ENCODE measurements at regions of chr1 and their contacts with region 1.

Region 1: GRCh38 chr1:61049850-61050540 is 32.4 kb upstream of the NFIA start:
- DNase-seq: peak; percentile 92 to 97 (median 95)
- H3K4me3 ChIP-seq: peak overlapping the region; percentile 76 to 99 (median 84)
- H3K27ac ChIP-seq: peak overlapping the region; percentile 47 to 95 (median 94)
- H3K4me1 ChIP-seq: peaks cover 6 to 36% of the 10 kb centered on the region in 2 donors
- H3K27me3 ChIP-seq: no peaks in the 10 kb centered on the region
- CTCF ChIP-seq: peak; percentile 95 to 98 (median 97)
- POLR2A ChIP-seq: peak; percentile 15 to 59

Region 2: GRCh38 chr1:60857851-60858250 is 192.1 kb before region 1 on chr1:
- intact Hi-C with region 1: loop called in 1 of 2 experiments (anchors 10 kb)
- DNase-seq: no peak
- H3K4me3 ChIP-seq: no peak overlapping the region
- H3K27ac ChIP-seq: no peak overlapping the region
- H3K4me1 ChIP-seq: no peaks in the 10 kb centered on the region
- H3K27me3 ChIP-seq: no peaks in the 10 kb centered on the region
- CTCF ChIP-seq: no peak
- POLR2A ChIP-seq: no peak

Region 3: DNA sequence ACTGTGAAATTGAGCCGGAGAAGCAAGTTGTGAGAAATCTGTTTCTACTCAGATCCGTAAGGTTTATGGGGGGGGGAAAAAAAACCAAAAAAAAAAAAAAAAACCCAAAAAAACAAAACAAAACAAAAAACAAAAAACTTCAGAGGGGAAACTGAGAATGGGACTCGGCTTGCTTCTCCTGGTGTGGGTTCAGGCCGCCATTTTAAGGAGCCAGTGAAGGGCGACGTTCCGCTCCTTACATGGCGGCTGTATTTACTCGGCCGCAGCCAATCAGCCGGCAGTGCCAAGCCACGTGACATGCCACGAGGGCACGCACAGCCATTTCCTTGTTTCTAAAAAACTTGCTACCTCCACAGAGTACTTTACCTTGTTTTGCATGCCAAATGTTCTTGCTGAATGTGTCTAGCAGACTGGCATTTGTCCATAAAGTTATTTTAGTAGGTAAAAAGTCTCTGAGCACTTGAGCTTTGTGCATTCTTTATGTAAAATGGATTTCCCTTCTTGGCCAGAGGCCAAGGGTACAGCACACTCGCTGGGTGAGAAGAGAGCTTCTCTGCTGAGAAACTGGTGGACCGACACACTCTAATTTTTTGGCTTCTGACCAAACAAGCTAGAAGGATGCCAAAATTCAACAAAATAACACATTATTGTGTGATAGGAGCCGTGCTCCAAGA is 134.2 kb after region 1 on chr1:
- intact Hi-C with region 1: loop called in 1 of 2 experiments (anchors 10 kb)
- DNase-seq: peak; percentile 85 to 96 (median 95)
- H3K4me3 ChIP-seq: peak overlapping the region in 1 of 4 donors; percentile 33
- H3K27ac ChIP-seq: peak overlapping the region; percentile 26 to 79 (median 58)
- H3K4me1 ChIP-seq: peaks cover 9 to 63% of the 10 kb centered on the region in 2 donors
- H3K27me3 ChIP-seq: no peaks in the 10 kb centered on the region
- CTCF ChIP-seq: peak in 1 of 6 experiments; percentile 10
- POLR2A ChIP-seq: no peak

Region 4: DNA sequence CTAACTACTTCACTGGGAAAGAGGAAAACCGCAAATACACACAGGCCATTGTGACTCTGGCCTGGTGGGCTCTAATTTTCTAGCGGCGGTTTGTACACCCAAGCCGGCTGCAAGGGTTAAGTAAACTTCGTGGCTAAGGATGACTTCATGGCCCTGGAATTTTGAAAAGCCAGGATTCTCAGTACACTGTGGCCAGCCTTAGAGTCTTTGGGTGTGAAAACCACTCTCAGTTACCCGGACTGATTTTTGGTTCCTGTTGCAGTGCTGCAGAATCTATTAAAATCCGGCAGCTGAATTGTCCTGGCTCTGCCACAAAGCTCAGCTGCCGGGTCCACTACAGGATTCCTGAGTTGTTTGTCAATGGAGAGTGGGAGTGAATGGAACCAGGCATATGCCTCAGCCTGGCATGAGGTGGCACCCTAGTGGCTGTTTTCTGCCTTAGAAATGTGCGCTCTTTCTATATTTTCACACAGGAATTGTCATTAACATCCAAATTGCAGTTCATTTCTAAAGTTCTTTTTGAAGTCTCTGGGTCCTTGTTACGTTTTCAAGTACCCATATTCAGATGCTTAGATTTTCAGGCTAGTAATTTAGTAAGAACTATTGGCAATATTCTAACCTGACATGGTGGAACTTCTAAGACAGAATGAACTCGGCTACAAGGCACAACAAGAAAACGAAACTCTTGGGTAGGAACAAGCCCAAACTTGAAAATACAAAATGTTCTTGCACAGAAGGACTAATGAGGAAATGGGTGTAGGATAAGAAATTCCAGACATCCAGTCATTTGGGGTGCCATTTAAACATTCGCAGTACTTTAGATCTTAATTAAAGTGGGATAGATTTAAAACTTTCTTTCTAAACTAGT is 288.2 kb after region 1 on chr1:
- intact Hi-C with region 1: loop called (anchors 5 to 10 kb)
- DNase-seq: peak; percentile 67 to 91 (median 86)
- H3K4me3 ChIP-seq: peak overlapping the region in 1 of 4 donors; percentile 32
- H3K27ac ChIP-seq: peak overlapping the region in 4 of 5 donors; percentile 64 to 81 (median 71)
- H3K4me1 ChIP-seq: peaks cover 19 to 30% of the 10 kb centered on the region in 2 donors
- H3K27me3 ChIP-seq: no peaks in the 10 kb centered on the region
- CTCF ChIP-seq: peak; percentile 71 to 89 (median 80)
- POLR2A ChIP-seq: peak in 1 of 2 donors; percentile 22

Region 5: GRCh38 chr1:61448914-61449313 is 398.9 kb after region 1 on chr1:
- intact Hi-C with region 1: loop called in 1 of 2 experiments (anchors 10 kb)
- DNase-seq: peak in 6 of 7 donors; percentile 27 to 81 (median 49)
- H3K4me3 ChIP-seq: no peak overlapping the region
- H3K27ac ChIP-seq: peak overlapping the region in 3 of 5 donors; percentile 28 to 80 (median 72)
- H3K4me1 ChIP-seq: peaks cover 24 to 62% of the 10 kb centered on the region in 2 donors
- H3K27me3 ChIP-seq: no peaks in the 10 kb centered on the region
- CTCF ChIP-seq: no peak
- POLR2A ChIP-seq: no peak

Region 6: DNA sequence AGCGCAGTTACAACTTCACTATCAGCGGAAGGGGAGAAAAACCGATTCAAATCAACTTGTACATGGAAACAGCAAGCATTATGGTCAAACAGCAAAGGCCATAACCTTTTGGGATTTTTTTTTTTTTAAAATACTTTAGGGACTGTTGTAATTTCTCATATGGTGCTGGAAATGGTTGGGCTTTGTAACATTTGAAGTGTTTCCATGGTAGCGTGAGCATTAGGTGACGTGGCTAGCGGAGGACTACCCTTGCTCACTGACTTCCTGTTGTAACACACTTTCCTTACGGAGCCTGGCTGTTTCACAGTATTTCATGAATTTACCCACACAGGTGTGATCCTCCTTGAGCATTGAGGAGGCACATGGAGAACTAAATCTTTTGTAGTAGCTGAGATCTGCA is 405.4 kb after region 1 on chr1:
- intact Hi-C with region 1: loop called in 1 of 2 experiments (anchors 5 kb)
- DNase-seq: no peak
- H3K4me3 ChIP-seq: no peak overlapping the region
- H3K27ac ChIP-seq: no peak overlapping the region
- H3K4me1 ChIP-seq: peaks cover 19 to 44% of the 10 kb centered on the region in 2 donors
- H3K27me3 ChIP-seq: no peaks in the 10 kb centered on the region
- CTCF ChIP-seq: no peak
- POLR2A ChIP-seq: no peak

Region 7: DNA sequence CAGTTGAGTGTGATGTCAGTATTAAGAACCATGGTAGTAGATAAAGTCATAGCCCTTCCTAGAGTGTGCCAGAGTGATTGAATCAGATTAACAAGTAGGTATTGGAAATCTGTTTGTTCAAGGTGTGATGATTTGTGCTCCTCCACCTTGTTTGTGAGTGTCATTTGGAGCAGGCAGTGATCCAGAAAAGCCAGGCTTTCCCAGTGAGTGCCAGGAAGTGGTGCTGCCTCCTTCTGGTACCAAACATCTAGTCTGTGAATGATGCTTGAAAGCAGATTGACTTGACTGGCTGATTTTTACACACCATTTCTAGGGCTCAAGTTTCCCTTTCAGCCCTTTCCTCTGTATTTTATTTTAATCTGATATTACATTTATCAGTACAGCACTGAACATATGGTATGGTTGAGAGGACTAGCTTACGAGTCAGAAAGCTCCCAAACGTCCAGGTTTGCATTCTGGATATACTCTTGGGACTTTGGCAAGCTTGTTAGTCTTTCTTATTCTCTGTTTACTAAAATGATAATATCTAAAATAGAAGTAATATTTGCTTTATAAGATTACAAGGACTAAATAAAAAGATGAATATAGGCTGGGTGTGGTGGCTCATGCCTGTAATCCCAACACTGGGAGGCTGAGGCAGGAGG is 793.0 kb after region 1 on chr1:
- intact Hi-C with region 1: loop called in 1 of 2 experiments (anchors 10 kb)
- DNase-seq: peak in 3 of 7 donors; percentile 4 to 62 (median 21)
- H3K4me3 ChIP-seq: no peak overlapping the region
- H3K27ac ChIP-seq: no peak overlapping the region
- H3K4me1 ChIP-seq: peaks cover 0 to 14% of the 10 kb centered on the region in 2 donors
- H3K27me3 ChIP-seq: no peaks in the 10 kb centered on the region
- CTCF ChIP-seq: peak in 1 of 6 experiments; percentile 21
- POLR2A ChIP-seq: no peak

Measured in adrenal gland (tissue), 19 donors.